Activated CD4-positive, alpha-beta T cell treated with anti-CD3 and anti-CD28 coated beads for 36 hours (primary cell): ENCODE measurements at regions of chr12 and their contacts with region 1.

Region 1: DNA sequence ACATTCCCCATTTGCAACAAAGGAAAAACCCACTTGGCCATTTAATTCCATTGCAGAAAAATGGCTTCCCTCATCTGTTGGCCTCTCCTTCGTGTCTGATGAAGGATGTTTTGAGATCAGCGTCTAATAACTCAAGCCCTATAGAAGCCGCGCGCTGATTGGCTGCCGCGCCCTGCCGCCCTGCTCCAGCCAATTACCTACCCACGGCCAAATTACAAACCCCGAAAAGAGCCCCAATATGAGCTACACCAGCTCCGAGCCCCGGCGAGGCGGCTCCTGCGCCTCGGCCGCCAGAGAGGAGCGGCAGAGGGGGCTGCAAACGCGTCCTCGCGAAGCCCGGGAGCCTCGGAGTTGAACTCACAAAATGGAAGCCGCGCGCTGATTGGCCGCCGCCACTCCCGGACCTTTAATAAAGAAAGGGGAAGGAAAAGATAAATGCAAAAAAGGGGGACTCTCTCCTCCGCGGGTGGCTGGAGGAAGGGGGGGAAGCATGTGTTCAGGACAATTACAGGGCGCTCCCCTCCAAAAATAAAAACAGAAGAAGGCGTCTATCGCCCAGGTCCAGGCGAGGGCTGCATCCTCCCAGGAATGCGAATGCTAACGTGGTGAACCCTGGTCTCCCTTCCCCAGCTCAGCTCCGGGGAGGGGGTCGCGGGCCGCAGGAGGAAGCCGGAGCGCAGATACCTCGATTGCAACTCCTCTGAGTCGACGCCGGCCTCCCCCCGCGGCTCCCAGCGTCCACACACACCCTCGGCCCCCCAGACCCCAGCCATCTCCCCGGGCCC is 771 bp upstream of the SETD1B start:
- DNase-seq: peak; percentile 95
- ATAC-seq: peak; percentile 62
- H3K4me3 Mint-ChIP-seq: peak overlapping the region; percentile 88
- H3K27ac Mint-ChIP-seq: peak overlapping the region; percentile 99
- H3K4me1 Mint-ChIP-seq: peaks cover 30% of the 10 kb centered on the region
- H3K27me3 Mint-ChIP-seq: no peaks in the 10 kb centered on the region

Region 2: GRCh38 chr12:121038861-121039666 is 764.0 kb before region 1 on chr12 and contains the start of gene OASL:
- CTCF ChIA-PET with region 1: no interaction called
- POLR2A ChIA-PET with region 1: no interaction called
- intact Hi-C with region 1: loop called in 1 of 2 experiments (anchors 5 kb)
- DNase-seq: peak; percentile 72
- ATAC-seq: peak; percentile 58
- H3K4me3 Mint-ChIP-seq: peak within 1 kb of the TSS; percentile 78
- H3K27ac Mint-ChIP-seq: peak within 1 kb of the TSS; percentile 91
- H3K4me1 Mint-ChIP-seq: peaks cover 52% of the 10 kb centered on the region
- H3K27me3 Mint-ChIP-seq: peaks cover 14% of the 10 kb centered on the region
- total RNA-seq, gene OASL: 13.9 to 19.6 TPM

Region 3: DNA sequence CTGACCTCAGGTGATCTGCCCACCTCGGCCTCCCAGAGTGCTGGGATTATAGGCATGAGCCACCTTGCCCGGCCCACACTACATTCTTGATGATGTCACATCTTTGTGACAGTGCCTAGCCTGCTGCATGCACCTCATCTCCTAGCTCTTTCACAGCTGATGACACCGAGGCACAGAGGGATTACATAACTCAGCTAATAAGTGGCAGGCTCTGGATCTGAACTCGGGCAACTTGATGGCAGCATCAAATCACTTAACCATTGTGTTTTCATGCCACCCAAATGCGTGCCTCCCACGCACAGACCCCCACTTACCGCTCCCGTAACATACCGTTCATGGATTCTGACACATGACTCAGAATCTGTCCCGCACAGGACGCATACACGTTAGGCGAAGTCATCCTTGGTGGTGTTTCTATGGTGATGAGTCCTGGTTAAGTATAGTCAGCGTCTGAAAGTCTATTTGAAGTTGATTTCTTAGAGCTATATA is 83.1 kb before region 1 on chr12:
- CTCF ChIA-PET with region 1: no interaction called
- POLR2A ChIA-PET with region 1: no interaction called
- intact Hi-C with region 1: no loop called
- DNase-seq: no peak
- ATAC-seq: no peak
- H3K4me3 Mint-ChIP-seq: no peak overlapping the region
- H3K27ac Mint-ChIP-seq: no peak overlapping the region
- H3K4me1 Mint-ChIP-seq: no peaks in the 10 kb centered on the region
- H3K27me3 Mint-ChIP-seq: no peaks in the 10 kb centered on the region

Region 4: DNA sequence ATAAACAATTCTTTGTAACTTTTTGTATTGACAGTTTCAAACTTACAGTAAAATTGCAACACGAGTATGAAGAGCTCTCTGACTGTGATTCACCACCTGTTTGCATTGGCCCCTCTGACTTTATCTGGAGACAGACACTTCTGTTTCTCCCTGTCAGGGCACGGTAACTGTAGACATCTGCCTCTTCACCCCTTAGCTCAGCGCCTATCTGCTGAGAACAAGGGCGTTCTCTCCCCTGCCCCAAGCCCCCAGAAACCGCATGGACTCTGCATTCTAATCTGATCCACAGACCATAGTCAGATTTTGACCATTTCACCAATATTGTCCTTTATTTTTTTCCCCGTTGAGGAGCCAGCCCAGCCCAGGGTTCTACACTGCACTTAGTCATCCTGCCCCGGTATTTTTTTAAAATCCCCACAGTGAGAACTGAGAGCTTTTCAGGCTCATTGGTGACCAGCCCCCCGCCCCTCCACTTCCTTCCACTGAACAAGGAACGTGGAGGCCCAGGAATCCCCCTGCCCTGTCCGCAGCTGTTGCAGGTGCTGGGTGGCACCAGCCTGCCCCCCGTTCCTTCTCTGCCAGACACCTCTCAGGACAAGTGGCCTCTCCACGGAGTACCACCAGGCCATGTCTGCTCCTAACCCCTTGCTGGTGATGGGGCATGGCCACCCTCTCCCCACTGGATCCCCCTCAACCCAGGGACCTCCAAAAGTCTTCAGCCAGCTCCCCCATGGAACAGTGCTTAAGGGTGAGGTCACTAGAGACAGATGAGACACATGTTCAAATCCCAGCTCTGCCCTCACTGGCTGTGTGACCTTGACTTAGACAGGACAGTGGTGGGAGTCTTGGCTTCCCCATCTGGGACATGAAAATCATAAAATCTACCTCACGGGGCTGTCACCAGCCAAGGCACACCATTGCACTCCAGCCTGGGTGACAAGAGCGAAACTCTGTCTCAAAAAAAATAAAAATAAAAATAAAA is 20.7 kb before region 1 on chr12:
- CTCF ChIA-PET with region 1: interaction called, 343 read pairs
- POLR2A ChIA-PET with region 1: no interaction called
- intact Hi-C with region 1: no loop called
- DNase-seq: peak; percentile 85
- ATAC-seq: peak; percentile 77
- H3K4me3 Mint-ChIP-seq: peak overlapping the region; percentile 68
- H3K27ac Mint-ChIP-seq: peak overlapping the region; percentile 96
- H3K4me1 Mint-ChIP-seq: peaks cover 74% of the 10 kb centered on the region
- H3K27me3 Mint-ChIP-seq: no peaks in the 10 kb centered on the region

Region 5: DNA sequence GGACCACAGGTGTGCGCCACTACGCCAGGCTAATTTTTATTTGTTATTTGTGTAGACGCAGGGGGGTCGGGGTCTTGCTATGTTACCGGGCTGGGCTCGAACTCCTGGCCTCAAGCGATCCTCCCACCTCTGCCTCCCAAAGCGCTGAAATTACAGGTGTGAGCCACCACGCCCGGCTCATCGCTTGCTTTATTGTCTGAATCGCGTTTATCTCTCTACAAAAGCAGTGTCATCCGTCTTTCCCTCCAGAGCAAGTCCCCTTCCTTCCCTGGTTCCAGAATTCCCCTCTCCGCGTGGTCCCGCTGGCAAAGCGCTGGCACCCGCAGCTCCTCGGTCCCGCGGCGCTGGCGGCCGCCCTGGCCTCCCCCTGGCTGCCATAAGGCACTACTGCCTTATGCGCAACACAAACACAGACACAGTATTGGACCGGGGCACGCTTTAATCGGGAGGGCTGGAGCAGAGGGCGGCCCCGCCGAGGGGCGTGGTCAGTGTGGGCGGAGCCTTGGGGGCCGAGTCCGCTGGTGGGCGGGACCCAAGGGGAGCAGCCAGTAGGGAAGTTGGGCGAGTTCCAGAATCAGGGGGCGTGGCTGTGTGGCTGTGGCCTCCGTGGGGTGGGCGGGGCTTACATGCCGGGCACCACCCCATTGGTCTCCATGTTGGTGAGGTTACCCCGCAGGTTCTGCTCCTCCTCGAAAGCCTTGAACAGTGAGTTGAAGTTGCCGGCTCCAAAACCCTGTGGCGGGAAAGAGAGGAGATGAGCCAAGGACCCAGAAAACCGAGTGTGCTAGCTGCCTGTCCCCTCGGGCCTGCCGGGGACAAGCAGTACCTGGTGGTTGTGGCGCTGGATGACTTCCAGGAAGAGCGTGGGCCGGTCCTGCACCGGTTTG is 36.3 kb after region 1 on chr12:
- CTCF ChIA-PET with region 1: interaction called, 3 read pairs
- POLR2A ChIA-PET with region 1: interaction called, 3 read pairs
- intact Hi-C with region 1: loop called in 1 of 2 experiments (anchors 2 kb)
- DNase-seq: peak; percentile 100
- ATAC-seq: peak; percentile 94
- H3K4me3 Mint-ChIP-seq: peak overlapping the region; percentile 91
- H3K27ac Mint-ChIP-seq: peak overlapping the region; percentile 91
- H3K4me1 Mint-ChIP-seq: peaks cover 14% of the 10 kb centered on the region
- H3K27me3 Mint-ChIP-seq: no peaks in the 10 kb centered on the region

Region 6: GRCh38 chr12:121933522-121934308 is 130.7 kb after region 1 on chr12:
- CTCF ChIA-PET with region 1: no interaction called
- POLR2A ChIA-PET with region 1: no interaction called
- intact Hi-C with region 1: no loop called
- DNase-seq: no peak
- ATAC-seq: no peak
- H3K4me3 Mint-ChIP-seq: no peak overlapping the region
- H3K27ac Mint-ChIP-seq: no peak overlapping the region
- H3K4me1 Mint-ChIP-seq: peaks cover 2% of the 10 kb centered on the region
- H3K27me3 Mint-ChIP-seq: no peaks in the 10 kb centered on the region

Region 7: GRCh38 chr12:122421821-122422729 is 619.0 kb after region 1 on chr12 and contains the start of gene CLIP1:
- CTCF ChIA-PET with region 1: no interaction called
- POLR2A ChIA-PET with region 1: no interaction called
- intact Hi-C with region 1: loop called in 1 of 2 experiments (anchors 5 kb)
- DNase-seq: peak; percentile 77
- ATAC-seq: peak; percentile 74
- H3K4me3 Mint-ChIP-seq: peak within 1 kb of the TSS; percentile 91
- H3K27ac Mint-ChIP-seq: peak within 1 kb of the TSS; percentile 89
- H3K4me1 Mint-ChIP-seq: peaks cover 37% of the 10 kb centered on the region
- H3K27me3 Mint-ChIP-seq: no peaks in the 10 kb centered on the region
- total RNA-seq, gene CLIP1: 53.9 to 58.6 TPM